Ascending aorta (tissue), 2 donors: ENCODE measurements at regions of chr7 and their contacts with region 1.

Region 1: DNA sequence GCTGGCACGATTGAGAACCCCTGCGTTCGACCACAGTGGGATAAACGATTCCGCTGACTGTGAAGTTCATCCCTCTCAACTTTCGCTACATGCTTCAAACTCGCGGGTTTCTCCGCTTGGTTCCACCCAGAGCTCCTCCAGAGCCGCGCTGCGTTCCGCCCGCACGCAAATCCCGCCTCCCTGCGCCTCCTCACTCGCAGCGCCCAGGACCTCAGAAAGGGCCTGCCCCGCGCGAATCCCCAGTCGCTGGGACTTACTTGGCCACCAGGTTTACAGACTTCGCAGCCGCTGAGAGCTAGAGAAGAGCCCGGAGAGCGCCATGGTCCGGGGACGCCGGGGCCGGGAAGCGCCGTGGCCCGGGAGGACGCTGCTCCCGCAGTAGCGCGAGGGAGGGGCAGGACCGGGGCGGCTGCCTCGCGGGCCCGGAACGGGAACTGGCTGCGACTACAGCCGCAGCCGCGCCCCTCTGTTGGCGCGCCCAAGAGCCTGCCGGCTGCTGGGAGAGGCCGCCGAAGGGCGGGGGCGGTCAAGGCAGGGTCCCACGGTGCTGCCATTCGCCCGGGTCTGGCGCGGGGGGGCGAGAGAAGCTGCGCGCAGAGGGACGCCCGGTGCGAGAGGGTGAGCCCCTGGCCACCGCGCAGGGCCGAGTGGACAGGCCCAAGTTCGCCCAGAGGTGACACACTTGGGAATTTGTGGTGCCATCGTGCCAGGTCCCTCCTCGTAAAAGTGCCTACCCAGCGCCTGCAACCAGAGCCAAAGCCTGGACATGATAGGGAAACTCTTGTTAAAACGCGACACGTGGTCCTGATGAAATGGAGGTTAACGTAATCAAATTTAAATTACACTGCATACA is at the start of gene NOD1:
- DNase-seq: peak in 1 of 2 donors; percentile 85
- H3K4me3 ChIP-seq: peak within 1 kb of the TSS; percentile 76 to 93
- H3K27ac ChIP-seq: peak within 1 kb of the TSS; percentile 84 to 90
- H3K4me1 ChIP-seq: peaks cover 0 to 23% of the 10 kb centered on the region in 2 donors
- H3K27me3 ChIP-seq: no peaks in the 10 kb centered on the region
- CTCF ChIP-seq: no peak
- total RNA-seq, gene NOD1: 20.0 TPM

Region 2: DNA sequence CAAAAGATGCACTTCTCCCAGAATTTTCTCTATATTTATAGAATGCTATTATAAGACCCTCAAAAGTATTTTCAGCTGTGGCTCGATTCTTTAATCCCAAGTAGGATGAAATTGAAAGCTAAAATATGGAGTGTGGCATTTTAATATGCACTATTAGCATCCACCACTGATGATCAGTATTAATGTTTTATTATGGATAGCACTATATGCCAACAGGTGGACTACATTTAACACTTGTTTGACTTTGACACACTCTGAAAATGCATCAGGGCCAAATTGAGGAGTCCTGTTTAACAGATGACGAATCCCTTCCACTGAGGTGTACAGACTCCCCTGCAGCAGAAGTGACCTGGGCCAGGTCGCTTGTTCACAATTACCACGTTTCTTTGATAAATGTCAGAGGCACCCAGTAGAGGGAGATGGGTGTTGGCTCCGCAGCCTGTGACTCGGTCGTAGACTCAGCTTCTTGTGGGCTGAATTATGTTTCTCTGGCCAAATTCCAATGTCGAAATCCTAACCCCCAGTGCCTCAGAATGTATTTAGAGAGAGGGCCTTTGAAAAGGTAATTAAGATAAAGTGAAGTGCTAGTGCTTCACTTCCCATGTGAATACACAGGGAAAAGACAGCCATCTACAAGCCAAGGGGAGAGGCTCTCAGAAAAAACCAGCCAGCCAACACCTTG is 624.2 kb before region 1 on chr7:
- intact Hi-C with region 1: no loop called
- DNase-seq: no peak
- H3K4me3 ChIP-seq: no peak overlapping the region
- H3K27ac ChIP-seq: no peak overlapping the region
- H3K4me1 ChIP-seq: no peaks in the 10 kb centered on the region
- H3K27me3 ChIP-seq: no peaks in the 10 kb centered on the region
- CTCF ChIP-seq: no peak

Region 3: DNA sequence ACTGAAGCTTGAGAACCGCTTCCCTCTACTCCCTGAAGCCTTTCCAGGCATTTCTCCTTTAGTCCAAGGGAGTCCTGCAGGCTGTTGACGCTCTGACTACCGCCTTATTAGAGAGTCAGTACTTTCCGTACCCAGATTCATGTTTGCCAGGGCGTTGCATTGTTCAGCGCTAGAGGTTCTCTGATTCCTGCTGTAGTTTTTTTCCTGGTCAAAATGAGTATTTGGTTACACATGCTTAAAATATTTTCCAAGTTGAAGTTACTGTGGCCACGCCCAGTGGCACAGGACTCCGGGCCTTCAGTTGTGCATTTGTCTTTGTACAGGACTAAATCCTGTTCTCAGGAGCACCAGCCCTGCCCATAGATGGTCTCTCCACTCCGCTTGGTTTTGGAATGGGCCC is 335.9 kb before region 1 on chr7:
- intact Hi-C with region 1: loop called (anchors 5 kb)
- DNase-seq: peak in 1 of 2 donors; percentile 90
- H3K4me3 ChIP-seq: peak overlapping the region in 1 of 2 donors; percentile 29
- H3K27ac ChIP-seq: peak overlapping the region; percentile 51 to 74
- H3K4me1 ChIP-seq: peaks cover 12 to 39% of the 10 kb centered on the region in 2 donors
- H3K27me3 ChIP-seq: no peaks in the 10 kb centered on the region
- CTCF ChIP-seq: no peak

Region 4: GRCh38 chr7:30173058-30173897 is 305.3 kb before region 1 on chr7:
- intact Hi-C with region 1: loop called (anchors 5 kb)
- DNase-seq: peak; percentile 40 to 90
- H3K4me3 ChIP-seq: peak overlapping the region in 1 of 2 donors; percentile 34
- H3K27ac ChIP-seq: peak overlapping the region; percentile 66 to 86
- H3K4me1 ChIP-seq: peaks cover 32 to 69% of the 10 kb centered on the region in 2 donors
- H3K27me3 ChIP-seq: no peaks in the 10 kb centered on the region
- CTCF ChIP-seq: peak in 1 of 3 experiments; percentile 35

Region 5: GRCh38 chr7:30504347-30505173 is 26.0 kb after region 1 on chr7 and contains the start of gene GGCT:
- intact Hi-C with region 1: loop called (anchors 1 kb)
- DNase-seq: peak; percentile 99 to 100
- H3K4me3 ChIP-seq: peak within 1 kb of the TSS; percentile 88 to 95
- H3K27ac ChIP-seq: peak within 1 kb of the TSS; percentile 88 to 93
- H3K4me1 ChIP-seq: peaks cover 2 to 6% of the 10 kb centered on the region in 2 donors
- H3K27me3 ChIP-seq: no peaks in the 10 kb centered on the region
- CTCF ChIP-seq: no peak
- total RNA-seq, gene GGCT: 0.43 TPM

Region 6: DNA sequence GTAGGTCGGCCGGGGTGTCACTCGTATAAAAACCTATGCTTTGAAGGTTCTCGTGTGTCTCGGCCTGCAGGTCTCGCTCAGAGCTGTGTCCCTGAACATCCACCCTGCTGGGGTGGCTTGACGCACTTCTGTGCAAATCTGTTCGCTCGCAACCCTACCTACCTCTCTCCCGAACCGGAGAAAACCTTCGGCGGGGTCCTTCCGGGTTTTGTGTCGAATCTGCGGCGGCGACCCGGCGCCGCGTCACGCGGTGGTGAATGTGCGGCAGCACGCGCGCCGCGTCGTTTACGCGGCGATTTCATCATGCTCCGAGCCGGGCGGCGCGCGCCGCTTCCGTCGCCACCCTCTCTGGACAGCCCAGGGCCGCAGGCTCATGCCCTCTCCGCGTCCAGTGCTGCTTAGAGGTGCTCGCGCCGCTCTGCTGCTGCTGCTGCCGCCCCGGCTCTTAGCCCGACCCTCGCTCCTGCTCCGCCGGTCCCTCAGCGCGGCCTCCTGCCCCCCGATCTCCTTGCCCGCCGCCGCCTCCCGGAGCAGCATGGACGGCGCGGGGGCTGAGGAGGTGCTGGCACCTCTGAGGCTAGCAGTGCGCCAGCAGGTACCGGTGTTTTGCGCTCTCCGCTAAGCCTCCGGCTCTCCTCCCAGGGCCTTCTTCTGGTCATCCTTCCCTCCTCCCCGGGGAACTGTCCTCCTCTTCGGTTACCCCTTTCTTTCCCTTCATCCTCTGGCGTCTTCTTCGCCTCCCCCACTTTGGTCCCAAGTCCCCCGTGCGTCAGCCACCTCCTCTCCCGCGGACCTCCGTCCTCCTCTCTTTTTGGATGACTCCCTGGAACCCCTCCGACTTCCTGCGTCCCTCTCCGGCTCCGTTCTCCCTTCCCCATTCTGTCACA is 116.2 kb after region 1 on chr7 and contains the start of gene GARS1:
- intact Hi-C with region 1: loop called (anchors 5 kb)
- DNase-seq: peak; percentile 65 to 94
- H3K4me3 ChIP-seq: peak within 1 kb of the TSS; percentile 86 to 96
- H3K27ac ChIP-seq: peak within 1 kb of the TSS; percentile 93 to 98
- H3K4me1 ChIP-seq: peaks cover 4 to 18% of the 10 kb centered on the region in 2 donors
- H3K27me3 ChIP-seq: no peaks in the 10 kb centered on the region
- CTCF ChIP-seq: no peak
- total RNA-seq, gene GARS1: 41.7 TPM